ENCODE measurements at regions of chr2 and their contacts with region 1.

Region 1: GRCh38 chr2:160970052-160970965 is 189.9 kb upstream of the TANK start:
- DNase-seq: no peak
- H3K4me3 ChIP-seq: peak overlapping the region in 1 of 8 donors; percentile 36
- H3K27ac ChIP-seq: peak overlapping the region in 7 of 8 donors; percentile 29 to 75 (median 62)
- H3K4me1 ChIP-seq: peaks cover 0 to 15% (median 2%) of the 10 kb centered on the region in 6 donors
- H3K27me3 ChIP-seq: no peaks in the 10 kb centered on the region
- CTCF ChIP-seq: peak in 10 of 11 experiments; percentile 16 to 75 (median 59)
- POLR2A ChIP-seq: no peak

Region 2: GRCh38 chr2:160252278-160252887 is 717.9 kb before region 1 on chr2:
- intact Hi-C with region 1: loop called (anchors 10 kb)
- DNase-seq: no peak
- H3K4me3 ChIP-seq: no peak overlapping the region
- H3K27ac ChIP-seq: no peak overlapping the region
- H3K4me1 ChIP-seq: peaks cover 0 to 14% (median 7%) of the 10 kb centered on the region in 6 donors
- H3K27me3 ChIP-seq: no peaks in the 10 kb centered on the region
- CTCF ChIP-seq: peak; percentile 53 to 83 (median 73)
- POLR2A ChIP-seq: no peak